ENCODE measurements at regions of chr19 and their contacts with region 1.

Region 1: GRCh38 chr19:19203012-19203856 is at the start of gene NR2C2AP:
- DNase-seq: peak in 1 of 2 experiments; percentile 88
- H3K4me3 ChIP-seq: peak within 1 kb of the TSS; percentile 78 to 92 (median 88)
- H3K27ac ChIP-seq: no peak within 1 kb of the TSS; the same call in 1 of the 2 replicates
- H3K4me1 ChIP-seq: peaks cover 0 to 6% (median 0%) of the 10 kb centered on the region in 4 experiments; a peak in 2 of 7 replicates
- H3K27me3 ChIP-seq: peaks cover 0 to 35% (median 34%) of the 10 kb centered on the region in 4 experiments; a peak in 6 of 7 replicates
- CTCF ChIP-seq: no peak
- EP300 ChIP-seq: no peak
- POLR2A ChIP-seq: no peak
- RAD21 ChIP-seq: no peak
- total RNA-seq, gene NR2C2AP: 20.5 and 24.9 TPM in 2 replicates

Region 2: DNA sequence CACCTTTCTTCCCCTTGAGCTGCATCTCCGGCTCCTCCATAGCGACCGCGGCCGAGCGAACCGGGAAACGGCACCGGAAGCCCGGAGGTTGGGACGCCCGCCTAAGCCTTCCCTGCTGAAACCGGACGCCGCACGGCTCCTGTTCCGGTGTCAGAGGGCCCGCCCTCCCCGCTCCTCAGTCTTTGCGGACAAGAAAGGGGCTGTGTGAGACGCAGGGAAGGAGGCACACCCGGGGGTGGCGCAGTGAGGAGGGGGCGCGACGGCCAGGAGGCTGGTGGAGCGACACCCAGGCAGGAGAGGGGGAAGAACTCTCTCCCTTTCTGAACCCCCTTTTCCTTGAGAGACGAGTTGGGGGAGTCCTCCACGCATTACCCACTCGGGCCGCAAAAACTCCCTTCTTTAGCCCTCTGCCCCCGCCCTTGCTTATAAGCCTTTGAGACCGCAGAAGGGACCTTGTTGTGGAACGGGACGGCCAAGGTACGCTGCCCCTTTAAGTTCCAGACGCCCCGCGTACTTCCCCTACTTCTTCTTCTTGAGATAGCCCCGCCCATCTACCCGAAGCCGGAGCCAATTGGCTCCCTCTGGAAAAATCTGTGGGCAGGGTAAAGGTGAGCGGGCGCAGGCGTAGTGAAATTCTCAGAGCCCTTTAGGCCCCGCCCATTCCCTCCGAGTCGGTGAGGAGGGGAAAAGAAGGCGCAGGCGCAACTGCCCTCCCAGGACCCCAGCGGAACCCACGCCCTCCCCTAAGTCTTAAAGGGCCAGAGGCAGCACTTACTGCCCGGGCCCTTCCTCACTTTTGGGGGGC is 11.0 kb before region 1 on chr19 and contains the starts of genes BORCS8 and RFXANK:
- CTCF ChIA-PET with region 1: interaction called, 4 read pairs
- POLR2A ChIA-PET with region 1: interaction called, 37 read pairs
- DNase-seq: peak; percentile 97 to 98
- H3K4me3 ChIP-seq: peak within 1 kb of the TSS; percentile 85 to 96 (median 92)
- H3K27ac ChIP-seq: peak within 1 kb of the TSS; percentile 91
- H3K4me1 ChIP-seq: no peaks in the 10 kb centered on the region
- H3K27me3 ChIP-seq: no peaks in the 10 kb centered on the region
- CTCF ChIP-seq: peak in 1 of 3 experiments; percentile 4; a peak in 1 of 4 replicates
- EP300 ChIP-seq: peak in 1 of 2 experiments; percentile 33; a peak in 1 of 3 replicates
- POLR2A ChIP-seq: peak in 1 of 2 experiments; percentile 80; a peak in 2 of 3 replicates
- RAD21 ChIP-seq: no peak; a peak in 1 of 4 replicates
- total RNA-seq, gene BORCS8: 15.9 and 20.9 TPM in 2 replicates
- total RNA-seq, gene RFXANK: 72.9 and 77.7 TPM in 2 replicates

Region 3: GRCh38 chr19:19214892-19215291 is 11.7 kb after region 1 on chr19:
- CTCF ChIA-PET with region 1: interaction called, 6 read pairs
- POLR2A ChIA-PET with region 1: interaction called, 45 read pairs
- DNase-seq: peak in 1 of 2 experiments; percentile 100
- H3K4me3 ChIP-seq: no peak overlapping the region
- H3K27ac ChIP-seq: no peak overlapping the region
- H3K4me1 ChIP-seq: peaks cover 0 to 16% (median 10%) of the 10 kb centered on the region in 4 experiments; a peak in 6 of 7 replicates
- H3K27me3 ChIP-seq: peaks cover 11 to 35% (median 30%) of the 10 kb centered on the region in 4 experiments
- CTCF ChIP-seq: no peak
- EP300 ChIP-seq: no peak
- POLR2A ChIP-seq: no peak
- RAD21 ChIP-seq: no peak

Region 4: GRCh38 chr19:19224852-19225494 is 21.7 kb after region 1 on chr19:
- CTCF ChIA-PET with region 1: interaction called, 5 read pairs
- POLR2A ChIA-PET with region 1: interaction called, 10 read pairs
- DNase-seq: peak; percentile 73 to 91
- H3K4me3 ChIP-seq: peak overlapping the region; percentile 17 to 59 (median 33)
- H3K27ac ChIP-seq: no peak overlapping the region
- H3K4me1 ChIP-seq: peaks cover 0 to 7% (median 3%) of the 10 kb centered on the region in 4 experiments; a peak in 4 of 7 replicates
- H3K27me3 ChIP-seq: peaks cover 2 to 17% (median 11%) of the 10 kb centered on the region in 4 experiments
- CTCF ChIP-seq: peak; percentile 76 to 78 (median 76)
- EP300 ChIP-seq: no peak
- POLR2A ChIP-seq: no peak
- RAD21 ChIP-seq: peak; percentile 63 to 68

Measured in H1 (cell line).